Psoas muscle (tissue), 8 donors: ENCODE measurements at regions of chr20 and their contacts with region 1.

Region 1: DNA sequence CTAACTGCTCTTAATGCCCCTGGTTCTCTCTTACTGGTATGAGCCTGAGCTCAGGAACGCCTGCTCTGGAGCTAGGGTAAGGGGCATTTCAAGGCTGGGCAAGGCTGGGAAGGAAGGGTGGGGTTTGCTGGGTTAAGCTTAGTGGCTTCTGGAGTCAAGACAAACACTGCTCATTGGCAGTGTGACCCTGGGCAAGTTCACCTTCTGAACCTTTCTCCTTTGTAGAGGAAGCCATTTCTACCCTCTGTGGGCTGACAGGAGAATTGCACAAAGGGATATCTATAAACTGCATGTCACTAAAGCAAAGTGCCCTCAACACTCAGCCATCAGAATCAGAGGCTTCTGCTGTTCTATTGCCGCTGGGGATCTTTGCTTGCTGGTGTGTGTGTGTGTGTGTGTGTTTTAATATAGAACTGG is 20.3 kb upstream of the LRRN4 start:
- DNase-seq: no peak
- ATAC-seq: peak in 1 of 4 donors; percentile 35
- H3K4me3 ChIP-seq: no peak overlapping the region
- H3K27ac ChIP-seq: no peak overlapping the region
- H3K4me1 ChIP-seq: peaks cover 9% of the 10 kb centered on the region
- H3K27me3 ChIP-seq: no peaks in the 10 kb centered on the region
- CTCF ChIP-seq: peak; percentile 27

Region 2: DNA sequence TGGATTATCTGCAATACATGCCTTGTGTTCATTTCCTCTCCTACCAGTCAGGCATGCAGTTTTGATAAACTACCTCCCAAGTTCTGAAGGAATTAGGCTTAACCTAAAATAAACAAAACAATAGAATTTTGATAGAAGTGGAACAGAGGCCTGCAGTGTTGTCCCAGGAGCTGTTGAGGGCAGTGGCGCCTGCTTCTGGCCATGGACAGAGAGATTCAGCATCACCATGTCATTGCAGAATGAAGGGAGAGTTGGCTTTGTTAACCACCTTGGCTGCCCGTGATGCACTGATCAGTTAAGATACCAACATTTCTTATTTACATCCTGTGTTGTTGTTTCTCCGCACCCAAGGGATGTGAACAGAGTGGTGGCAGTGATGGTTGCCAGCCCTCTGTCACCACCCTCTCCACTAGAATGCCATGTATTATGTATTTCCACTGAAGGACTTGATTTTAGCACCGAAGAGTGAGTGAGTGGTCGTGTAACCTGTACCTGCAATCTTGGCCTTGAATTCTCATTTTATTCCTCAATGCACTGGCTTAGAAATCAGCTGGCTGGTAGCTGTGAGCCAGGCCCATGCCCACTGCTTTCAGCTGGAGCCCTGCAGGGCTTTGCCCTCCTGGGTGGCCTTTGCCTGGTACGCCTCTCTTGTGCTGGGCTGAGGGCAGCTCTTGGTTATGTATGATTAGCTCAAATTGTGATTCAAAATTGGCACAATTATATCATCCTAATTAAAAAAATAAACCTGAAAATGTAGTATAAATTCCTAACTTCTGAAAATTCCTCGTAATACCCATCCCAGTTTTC is 267.5 kb before region 1 on chr20:
- intact Hi-C with region 1: loop called in 1 of 2 experiments (anchors 10 kb)
- DNase-seq: no peak
- ATAC-seq: no peak
- H3K4me3 ChIP-seq: no peak overlapping the region
- H3K27ac ChIP-seq: no peak overlapping the region
- H3K4me1 ChIP-seq: peaks cover 11% of the 10 kb centered on the region
- H3K27me3 ChIP-seq: no peaks in the 10 kb centered on the region
- CTCF ChIP-seq: no peak

Region 3: DNA sequence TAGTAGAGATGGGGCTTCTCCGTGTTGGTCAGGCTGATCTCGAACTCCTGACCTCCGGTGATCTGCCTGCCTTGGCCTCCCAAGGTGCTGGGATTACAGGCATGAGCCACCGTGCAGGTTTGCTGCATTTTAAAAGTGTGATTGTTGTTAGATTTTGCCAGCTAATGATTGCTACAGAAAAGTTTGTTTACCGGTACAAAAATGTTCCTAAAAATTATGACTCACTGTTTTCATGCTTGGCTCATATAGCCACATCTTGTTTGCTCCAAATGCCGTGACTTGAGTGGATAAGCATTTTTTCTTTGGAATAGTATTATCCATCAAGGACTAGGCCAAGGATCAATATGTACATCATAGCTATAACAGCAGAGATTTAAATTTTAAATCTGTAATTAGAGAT is 44.6 kb before region 1 on chr20:
- intact Hi-C with region 1: loop called in 1 of 2 experiments (anchors 2 kb)
- DNase-seq: no peak
- ATAC-seq: no peak
- H3K4me3 ChIP-seq: no peak overlapping the region
- H3K27ac ChIP-seq: peak overlapping the region; percentile 27
- H3K4me1 ChIP-seq: peaks cover 45% of the 10 kb centered on the region
- H3K27me3 ChIP-seq: no peaks in the 10 kb centered on the region
- CTCF ChIP-seq: no peak